SK-N-SH (cell line): ENCODE measurements at regions of chr11 and their contacts with region 1.

Region 1: GRCh38 chr11:118956094-118956846 is at the start of gene UPK2:
- DNase-seq: peak; percentile 93
- H3K4me3 ChIP-seq: no peak within 1 kb of the TSS; a peak in 1 of 4 replicates
- H3K27ac ChIP-seq: no peak within 1 kb of the TSS
- H3K4me1 ChIP-seq: peaks cover 0 to 6% of the 10 kb centered on the region in 2 experiments; a peak in 1 of 4 replicates
- H3K27me3 ChIP-seq: no peaks in the 10 kb centered on the region
- CTCF ChIP-seq: peak; percentile 93
- EP300 ChIP-seq: no peak
- RAD21 ChIP-seq: peak; percentile 98
- polyA plus RNA-seq, gene UPK2: 0.15 and 0.21 TPM in 2 replicates

Region 2: DNA sequence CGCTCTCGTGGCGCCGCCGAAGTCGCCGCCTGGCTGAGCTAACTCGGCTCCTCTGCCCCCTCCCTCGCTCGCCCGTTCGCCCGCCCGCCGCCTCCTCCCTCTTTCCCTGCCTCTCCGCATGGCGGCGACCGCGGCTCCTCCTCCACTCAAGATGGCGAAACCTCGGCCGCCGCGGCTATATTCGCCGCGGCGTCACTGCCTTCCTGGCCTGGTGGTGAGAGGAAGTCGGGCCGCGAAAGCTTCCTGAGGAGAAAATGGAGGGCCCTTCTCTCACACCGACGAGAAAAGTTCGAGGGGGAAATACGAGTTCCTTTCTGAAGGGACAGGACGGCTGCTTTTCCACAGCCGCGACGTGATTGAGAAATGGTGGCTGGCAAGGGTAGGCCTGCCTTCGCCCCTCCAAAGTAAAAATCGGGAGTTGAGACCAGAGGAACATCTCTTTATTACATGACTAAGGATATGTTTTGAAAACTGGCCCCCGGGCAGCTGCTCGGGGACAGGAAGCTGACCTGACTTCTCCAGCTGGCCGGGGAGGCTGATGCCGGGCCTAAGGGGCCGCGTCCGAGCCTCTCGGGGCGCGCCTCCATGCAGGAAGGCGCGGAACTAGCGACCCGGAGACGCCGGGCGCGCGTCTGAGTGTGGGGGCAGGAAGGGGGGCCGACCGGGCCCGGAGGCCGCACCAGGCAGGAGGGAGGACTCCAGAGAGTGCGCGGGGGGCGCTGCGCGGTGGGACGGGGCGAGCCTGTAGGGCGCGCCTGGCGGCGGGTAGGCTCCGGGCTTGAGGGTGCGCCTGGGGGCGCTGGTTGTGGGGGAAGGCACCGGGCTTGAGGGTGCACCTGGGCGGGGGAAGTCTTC is 164.9 kb before region 1 on chr11 and contains the start of gene DDX6:
- CTCF ChIA-PET with region 1: interaction called, 10 read pairs
- POLR2A ChIA-PET with region 1: interaction called, 6 read pairs
- DNase-seq: peak; percentile 94
- H3K4me3 ChIP-seq: peak within 1 kb of the TSS; percentile 71 to 90
- H3K27ac ChIP-seq: peak within 1 kb of the TSS; percentile 96 to 97
- H3K4me1 ChIP-seq: peaks cover 4 to 19% of the 10 kb centered on the region in 2 experiments; a peak in 2 of 4 replicates
- H3K27me3 ChIP-seq: no peaks in the 10 kb centered on the region
- CTCF ChIP-seq: peak; percentile 23
- EP300 ChIP-seq: peak in 1 of 2 experiments; percentile 29; a peak in 1 of 4 replicates
- RAD21 ChIP-seq: 0 out of 2 replicates have a peak, but pooled peaks have one; percentile 18
- polyA plus RNA-seq, gene DDX6: 7.9 and 13.0 TPM in 2 replicates

Region 3: DNA sequence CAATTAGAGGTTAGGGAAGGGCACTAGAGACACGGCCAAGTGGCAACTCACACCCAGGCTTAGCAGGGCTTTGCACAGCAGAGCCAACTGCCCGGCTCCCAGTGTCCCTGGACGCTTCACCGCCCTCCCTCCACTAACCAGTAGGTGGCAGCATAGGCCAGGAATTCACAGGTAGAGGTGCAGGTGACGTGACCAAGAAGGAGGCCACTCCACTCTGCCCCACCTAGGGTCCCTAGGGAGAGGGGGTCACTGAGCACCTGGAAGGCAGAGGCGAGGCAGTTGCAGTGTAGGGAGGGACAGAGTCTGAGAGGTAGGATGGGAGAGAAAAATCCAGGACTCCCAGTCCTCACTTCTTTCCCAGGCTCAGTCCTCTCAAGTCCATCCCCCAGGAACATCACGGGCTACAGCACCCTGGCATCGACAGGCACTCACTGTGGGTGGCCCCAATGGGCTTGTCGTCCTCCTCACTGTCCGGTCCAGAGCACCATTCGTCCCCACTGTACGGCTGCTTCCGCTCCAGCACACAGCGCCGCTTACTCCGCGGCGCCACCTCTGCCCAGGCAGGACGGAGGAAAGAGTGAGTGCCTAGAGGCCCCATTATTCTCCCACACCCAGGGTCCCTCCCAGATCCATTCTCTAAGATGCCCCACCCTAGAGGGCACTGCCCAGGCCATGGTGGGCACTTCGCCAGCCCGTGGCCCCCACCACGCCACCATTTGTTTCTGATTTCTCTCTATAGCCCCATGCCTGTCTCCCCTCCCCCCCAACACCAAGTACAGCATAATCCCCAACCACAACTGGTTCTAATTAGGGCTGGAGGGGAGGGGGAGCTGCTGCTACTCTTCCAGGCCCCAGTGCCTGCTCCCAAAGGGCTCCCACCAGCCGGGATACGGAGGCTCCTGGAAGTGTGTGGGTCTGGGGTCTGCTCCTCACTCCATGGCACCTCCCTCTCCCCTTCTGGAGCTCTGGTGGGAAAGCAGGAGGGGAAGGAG is 48.9 kb before region 1 on chr11:
- CTCF ChIA-PET with region 1: interaction called, 112 read pairs
- POLR2A ChIA-PET with region 1: interaction called, 4 read pairs
- DNase-seq: peak; percentile 90
- H3K4me3 ChIP-seq: peak overlapping the region; percentile 18 to 23; a peak in 2 of 4 replicates
- H3K27ac ChIP-seq: peak overlapping the region; percentile 98 to 100
- H3K4me1 ChIP-seq: peaks cover 45 to 49% of the 10 kb centered on the region in 2 experiments
- H3K27me3 ChIP-seq: no peaks in the 10 kb centered on the region
- CTCF ChIP-seq: peak; percentile 93
- EP300 ChIP-seq: peak in 1 of 2 experiments; percentile 46; a peak in 2 of 4 replicates
- RAD21 ChIP-seq: peak; percentile 98

Region 4: GRCh38 chr11:118939953-118940598 is 16.2 kb before region 1 on chr11:
- CTCF ChIA-PET with region 1: interaction called, 186 read pairs
- POLR2A ChIA-PET with region 1: no interaction called
- DNase-seq: peak; percentile 50
- H3K4me3 ChIP-seq: no peak overlapping the region
- H3K27ac ChIP-seq: no peak overlapping the region
- H3K4me1 ChIP-seq: peaks cover 4 to 6% of the 10 kb centered on the region in 2 experiments; a peak in 2 of 4 replicates
- H3K27me3 ChIP-seq: no peaks in the 10 kb centered on the region
- CTCF ChIP-seq: no peak
- EP300 ChIP-seq: no peak
- RAD21 ChIP-seq: no peak

Region 5: DNA sequence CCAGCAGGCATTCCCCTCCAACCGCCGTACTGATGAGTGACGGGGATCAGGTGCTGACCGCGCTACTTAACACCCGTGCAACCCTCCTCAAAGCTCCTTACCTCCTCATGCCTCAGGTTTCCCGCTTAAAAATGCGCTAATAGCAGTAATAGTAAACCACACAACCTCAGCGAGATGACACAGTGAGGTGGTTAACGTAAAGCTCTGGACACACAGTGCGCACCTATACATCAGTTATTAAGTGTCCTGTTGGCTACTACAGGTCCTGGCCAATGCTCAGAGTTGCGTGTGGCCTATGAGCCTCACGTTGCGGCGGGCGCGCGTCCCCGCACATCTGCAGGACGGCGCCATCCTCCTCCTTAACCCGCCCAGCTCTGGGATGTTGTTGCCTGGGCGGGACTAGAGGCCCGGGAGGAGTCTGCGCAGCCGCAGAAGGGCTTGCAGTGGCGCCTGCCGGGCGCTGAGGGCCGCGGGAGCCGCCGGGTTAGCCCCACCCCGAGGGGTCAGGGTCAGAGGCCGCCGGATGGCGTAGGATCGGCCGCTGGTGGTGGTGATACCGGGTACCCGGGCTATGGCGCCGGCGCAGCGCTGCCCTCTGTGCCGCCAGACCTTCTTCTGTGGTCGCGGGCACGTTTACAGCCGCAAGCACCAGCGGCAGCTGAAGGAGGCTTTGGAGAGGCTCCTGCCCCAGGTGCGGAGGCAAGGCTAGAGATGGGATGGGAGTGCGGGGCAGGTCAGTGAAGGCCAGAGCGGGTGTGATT is 41.5 kb after region 1 on chr11 and contains the start of gene CENATAC:
- CTCF ChIA-PET with region 1: interaction called, 13 read pairs
- POLR2A ChIA-PET with region 1: interaction called, 3 read pairs
- DNase-seq: peak; percentile 99
- H3K4me3 ChIP-seq: peak within 1 kb of the TSS; percentile 77 to 97
- H3K27ac ChIP-seq: peak within 1 kb of the TSS; percentile 67 to 69
- H3K4me1 ChIP-seq: peaks cover 5 to 16% of the 10 kb centered on the region in 2 experiments; a peak in 3 of 4 replicates
- H3K27me3 ChIP-seq: no peaks in the 10 kb centered on the region
- CTCF ChIP-seq: no peak
- EP300 ChIP-seq: no peak
- RAD21 ChIP-seq: no peak
- polyA plus RNA-seq, gene CENATAC: 16.0 and 19.8 TPM in 2 replicates

Region 6: DNA sequence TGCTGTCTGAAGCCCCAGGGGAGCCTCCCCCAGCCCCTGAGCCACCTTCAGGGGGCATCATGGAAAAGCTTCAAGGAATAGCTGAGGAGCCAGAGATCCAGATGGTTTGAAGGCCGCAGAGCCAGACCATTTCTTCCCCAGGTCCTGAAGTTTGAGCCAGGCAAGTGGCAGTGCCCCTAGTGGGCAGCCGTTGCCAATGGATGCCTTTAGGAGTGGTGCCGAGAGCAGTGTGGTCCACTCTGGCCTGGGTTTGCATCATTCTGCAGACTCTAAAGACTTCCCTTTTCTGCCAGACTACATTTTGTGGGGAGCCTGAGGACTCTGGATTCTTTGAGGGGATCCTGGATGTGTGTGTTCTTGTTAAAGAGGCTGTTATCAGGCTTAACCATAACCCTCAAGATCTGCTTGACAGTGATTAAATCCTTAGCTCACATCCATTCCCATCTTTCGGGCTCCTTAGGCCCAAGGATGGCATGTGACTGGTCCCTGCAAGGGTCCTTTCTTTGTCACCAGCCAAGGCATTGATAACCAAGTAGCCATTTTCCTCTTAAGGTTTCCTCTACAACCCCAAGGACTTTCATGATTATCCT is 178.2 kb after region 1 on chr11:
- CTCF ChIA-PET with region 1: no interaction called
- POLR2A ChIA-PET with region 1: no interaction called
- DNase-seq: peak; percentile 48
- H3K4me3 ChIP-seq: no peak overlapping the region
- H3K27ac ChIP-seq: no peak overlapping the region
- H3K4me1 ChIP-seq: no peaks in the 10 kb centered on the region
- H3K27me3 ChIP-seq: no peaks in the 10 kb centered on the region
- CTCF ChIP-seq: peak; percentile 65
- EP300 ChIP-seq: no peak
- RAD21 ChIP-seq: no peak